Endothelial cell of umbilical vein (primary cell): ENCODE measurements at regions of chr11 and their contacts with region 1.

Region 1: DNA sequence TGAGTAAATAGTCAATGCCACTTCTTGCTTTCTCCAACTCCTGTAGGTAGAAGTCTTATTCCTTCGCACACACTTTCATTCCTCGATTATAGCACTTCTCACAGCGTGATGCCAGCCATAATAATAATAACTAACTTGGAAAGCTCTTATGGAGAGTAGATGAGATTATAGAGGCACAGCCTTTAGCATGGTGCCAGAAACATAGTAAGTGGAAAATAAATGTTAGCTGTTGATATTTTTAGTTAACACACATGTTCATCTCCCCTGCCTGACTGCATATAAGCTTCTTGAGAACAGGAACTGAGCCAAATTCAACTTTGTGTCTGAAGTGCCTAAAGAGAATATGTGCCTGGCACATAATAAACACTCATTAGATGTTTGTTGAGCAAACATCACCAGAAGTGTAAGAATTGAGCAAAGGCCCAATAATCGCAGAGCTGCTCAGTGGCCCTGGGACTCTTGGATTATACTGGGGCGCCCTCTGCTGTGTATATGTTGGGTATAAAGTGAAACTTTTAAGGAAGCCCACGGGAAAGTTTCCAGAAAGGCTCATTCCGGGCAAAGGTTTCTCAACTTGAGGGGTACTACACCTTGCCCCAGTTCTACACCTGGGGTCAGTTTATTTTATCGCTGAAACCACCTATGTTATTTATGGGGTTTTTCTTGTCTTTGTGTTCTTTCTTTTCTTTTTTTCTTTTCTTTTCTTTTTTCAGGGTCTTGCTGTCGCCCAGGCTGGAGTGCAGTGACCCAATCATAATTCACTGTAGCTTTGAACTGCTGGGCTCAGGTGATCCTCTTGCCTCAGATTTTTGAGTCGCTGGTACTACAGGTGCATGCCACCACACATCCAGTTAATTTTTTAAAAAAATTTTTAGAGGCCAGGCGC is 22.3 kb downstream of the SLN start:
- DNase-seq: peak; percentile 67
- H3K4me3 ChIP-seq: no peak overlapping the region
- H3K27ac ChIP-seq: no peak overlapping the region
- H3K4me1 ChIP-seq: peaks cover 6% of the 10 kb centered on the region
- H3K27me3 ChIP-seq: no peaks in the 10 kb centered on the region
- CTCF ChIP-seq: peak; percentile 52 to 57
- POLR2A ChIP-seq: no peak

Region 2: GRCh38 chr11:107565219-107565937 is 124.2 kb before region 1 on chr11 and contains the start of gene ALKBH8:
- CTCF ChIA-PET with region 1: interaction called, 251 read pairs
- POLR2A ChIA-PET with region 1: no interaction called
- dilution Hi-C with region 1: no loop called
- intact Hi-C with region 1: loop called (anchors 1 kb)
- DNase-seq: peak; percentile 75
- H3K4me3 ChIP-seq: peak within 1 kb of the TSS; percentile 28 to 80 (median 79)
- H3K27ac ChIP-seq: peak within 1 kb of the TSS; percentile 48
- H3K4me1 ChIP-seq: peaks cover 36% of the 10 kb centered on the region
- H3K27me3 ChIP-seq: no peaks in the 10 kb centered on the region
- CTCF ChIP-seq: no peak
- POLR2A ChIP-seq: peak; percentile 67
- total RNA-seq, gene ALKBH8: 9.8 and 10.2 TPM in 2 replicates

Region 3: GRCh38 chr11:107583629-107584195 is 105.8 kb before region 1 on chr11:
- CTCF ChIA-PET with region 1: interaction called, 251 read pairs
- POLR2A ChIA-PET with region 1: no interaction called
- dilution Hi-C with region 1: no loop called
- intact Hi-C with region 1: no loop called
- DNase-seq: no peak
- H3K4me3 ChIP-seq: no peak overlapping the region
- H3K27ac ChIP-seq: no peak overlapping the region
- H3K4me1 ChIP-seq: no peaks in the 10 kb centered on the region
- H3K27me3 ChIP-seq: peaks cover 2 to 7% of the 10 kb centered on the region in 2 experiments
- CTCF ChIP-seq: no peak
- POLR2A ChIP-seq: no peak

Region 4: DNA sequence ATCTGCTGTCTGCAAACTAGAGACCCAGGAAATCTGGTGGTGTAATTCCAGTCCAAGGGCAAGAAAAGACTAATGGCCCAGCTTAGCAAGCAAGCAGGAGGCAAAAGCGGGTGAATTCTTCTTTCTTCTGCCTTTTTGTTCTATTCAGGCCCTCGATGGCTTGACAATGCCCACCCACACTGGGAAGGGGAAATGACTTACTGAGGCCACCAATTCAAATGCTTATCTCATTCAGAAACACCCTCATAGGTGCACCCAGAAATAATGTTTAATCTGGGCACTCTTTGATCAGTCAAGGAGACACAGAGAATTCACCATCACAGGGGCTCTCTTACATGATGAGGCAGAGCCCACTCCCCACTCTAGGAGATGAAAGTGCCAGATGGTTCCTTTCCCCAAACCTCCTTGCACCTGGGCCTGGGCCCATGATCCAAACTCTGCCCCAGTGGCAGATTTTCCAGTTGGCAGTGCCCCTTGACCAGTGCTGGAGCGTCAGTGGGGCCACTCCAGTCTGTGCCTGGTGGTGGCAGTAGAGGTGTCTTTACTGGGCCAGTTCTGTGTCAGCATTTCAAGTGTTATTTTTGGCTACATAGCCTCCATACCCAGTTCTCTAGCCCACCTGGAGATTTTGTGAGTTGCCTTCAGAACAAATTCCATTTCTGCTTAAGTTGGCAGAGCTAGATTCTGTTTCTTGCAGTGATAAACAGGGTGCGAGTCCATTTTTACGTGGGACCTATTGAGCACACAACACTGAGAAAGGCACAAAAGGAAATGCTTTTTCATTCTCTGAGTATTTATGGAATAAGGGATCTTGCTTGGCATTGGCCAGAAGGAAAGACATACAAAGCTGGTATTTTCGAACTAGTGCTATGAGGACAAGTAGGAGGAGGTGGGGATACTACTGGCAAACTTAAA is 91.1 kb before region 1 on chr11:
- CTCF ChIA-PET with region 1: interaction called, 177 read pairs
- POLR2A ChIA-PET with region 1: no interaction called
- dilution Hi-C with region 1: no loop called
- intact Hi-C with region 1: loop called (anchors 1 kb)
- DNase-seq: peak; percentile 63
- H3K4me3 ChIP-seq: no peak overlapping the region
- H3K27ac ChIP-seq: no peak overlapping the region
- H3K4me1 ChIP-seq: no peaks in the 10 kb centered on the region
- H3K27me3 ChIP-seq: peaks cover 2 to 19% of the 10 kb centered on the region in 2 experiments
- CTCF ChIP-seq: peak; percentile 77 to 81
- POLR2A ChIP-seq: no peak

Region 5: DNA sequence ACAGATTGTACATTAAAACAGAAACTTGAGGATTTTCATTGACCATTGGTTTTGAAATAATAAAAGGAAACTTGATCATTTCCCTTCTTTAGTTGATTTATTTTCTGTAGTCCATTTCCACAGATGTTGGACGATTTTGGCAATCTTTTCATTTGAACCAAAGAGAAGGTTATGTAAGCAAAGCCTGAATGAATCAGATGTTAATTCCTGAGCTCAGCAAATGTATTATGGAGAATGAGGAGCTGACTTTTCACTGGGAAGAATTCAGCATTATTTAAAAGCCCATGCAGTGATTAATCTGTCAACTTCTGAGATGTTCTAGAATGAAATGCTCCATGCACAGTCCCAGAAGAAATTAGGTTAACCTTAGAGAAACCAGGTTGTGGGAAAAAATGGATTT is 69.6 kb before region 1 on chr11:
- CTCF ChIA-PET with region 1: interaction called, 7 read pairs
- POLR2A ChIA-PET with region 1: no interaction called
- dilution Hi-C with region 1: loop called (anchors 5 kb)
- intact Hi-C with region 1: no loop called
- DNase-seq: peak; percentile 90
- H3K4me3 ChIP-seq: no peak overlapping the region
- H3K27ac ChIP-seq: no peak overlapping the region
- H3K4me1 ChIP-seq: peaks cover 31% of the 10 kb centered on the region
- H3K27me3 ChIP-seq: no peaks in the 10 kb centered on the region
- CTCF ChIP-seq: no peak
- POLR2A ChIP-seq: no peak

Region 6: GRCh38 chr11:107669191-107669740 is 20.3 kb before region 1 on chr11:
- CTCF ChIA-PET with region 1: interaction called, 20 read pairs
- POLR2A ChIA-PET with region 1: no interaction called
- dilution Hi-C with region 1: no loop called
- intact Hi-C with region 1: no loop called
- DNase-seq: no peak
- H3K4me3 ChIP-seq: no peak overlapping the region
- H3K27ac ChIP-seq: no peak overlapping the region
- H3K4me1 ChIP-seq: no peaks in the 10 kb centered on the region
- H3K27me3 ChIP-seq: no peaks in the 10 kb centered on the region
- CTCF ChIP-seq: no peak
- POLR2A ChIP-seq: no peak

Region 7: GRCh38 chr11:107770551-107770951 is 81.0 kb after region 1 on chr11:
- CTCF ChIA-PET with region 1: interaction called, 23 read pairs
- POLR2A ChIA-PET with region 1: no interaction called
- dilution Hi-C with region 1: no loop called
- intact Hi-C with region 1: no loop called
- DNase-seq: no peak
- H3K4me3 ChIP-seq: no peak overlapping the region
- H3K27ac ChIP-seq: no peak overlapping the region
- H3K4me1 ChIP-seq: no peaks in the 10 kb centered on the region
- H3K27me3 ChIP-seq: peaks cover 2 to 4% of the 10 kb centered on the region in 2 experiments
- CTCF ChIP-seq: no peak
- POLR2A ChIP-seq: no peak